A673 (cell line): ENCODE measurements at regions of chr7 and their contacts with region 1.

Region 1: DNA sequence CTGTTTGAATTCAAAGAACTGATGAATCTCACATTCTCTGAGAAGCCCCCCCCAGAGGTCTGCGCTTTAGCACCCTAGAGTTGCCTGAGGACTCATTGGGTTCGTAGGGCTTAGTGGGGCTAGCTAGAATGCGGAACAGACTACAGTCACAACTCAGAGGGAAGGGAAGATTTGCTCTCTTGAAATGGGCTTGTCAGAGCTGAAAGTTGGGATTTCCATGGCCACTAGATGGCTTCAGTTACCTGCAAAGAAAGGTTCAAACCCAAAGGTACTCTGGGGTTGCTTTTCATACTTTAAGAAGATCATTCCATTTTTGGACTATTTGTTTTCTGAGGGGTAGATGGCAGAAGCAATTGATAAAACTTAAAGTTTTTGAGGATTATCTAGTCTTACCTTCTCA is 205.0 kb downstream of the BBS9 start:
- DNase-seq: peak; percentile 39
- H3K4me3 ChIP-seq: no peak overlapping the region
- H3K27ac ChIP-seq: no peak overlapping the region
- H3K4me1 ChIP-seq: no peaks in the 10 kb centered on the region
- H3K27me3 ChIP-seq: no peaks in the 10 kb centered on the region
- CTCF ChIP-seq: peak; percentile 58

Region 2: GRCh38 chr7:33750177-33750576 is 415.8 kb after region 1 on chr7:
- CTCF ChIA-PET with region 1: no interaction called
- POLR2A ChIA-PET with region 1: no interaction called
- intact Hi-C with region 1: loop called (anchors 5 kb)
- DNase-seq: no peak
- H3K4me3 ChIP-seq: no peak overlapping the region
- H3K27ac ChIP-seq: no peak overlapping the region
- H3K4me1 ChIP-seq: peaks cover 21% of the 10 kb centered on the region
- H3K27me3 ChIP-seq: no peaks in the 10 kb centered on the region
- CTCF ChIP-seq: no peak